CD4-positive, alpha-beta T cell (primary cell): ENCODE measurements at regions of chr12 and their contacts with region 1.

Region 1: DNA sequence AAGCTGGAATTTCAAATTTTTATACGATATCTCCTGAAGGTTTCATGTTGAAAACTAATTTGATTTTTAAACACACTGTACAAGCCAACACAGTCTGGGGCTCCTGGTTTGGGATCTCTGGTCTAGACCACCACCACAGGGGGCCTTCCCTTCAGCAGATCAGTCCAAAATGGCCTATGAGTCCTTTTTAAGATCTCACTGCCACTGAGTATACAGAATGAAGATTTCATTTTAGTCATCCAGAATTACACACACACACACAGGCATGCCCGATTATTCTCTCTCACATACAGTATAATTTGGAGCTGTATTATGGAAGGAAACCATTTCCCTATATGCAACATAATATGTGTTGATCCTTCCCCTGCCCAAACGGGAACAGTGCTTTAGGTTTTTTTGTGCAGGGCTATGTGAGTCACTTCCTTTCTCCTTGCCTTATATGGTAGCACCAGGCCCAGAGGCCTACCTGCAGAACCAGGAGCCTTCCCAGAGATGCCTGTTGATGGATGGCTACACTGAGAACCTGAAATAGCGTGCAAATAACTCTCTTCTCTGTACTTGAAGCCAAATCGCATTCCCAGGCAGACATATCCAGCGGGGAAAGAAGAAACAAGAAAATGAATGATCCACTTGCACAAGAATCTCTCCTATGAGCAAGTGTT is 28.1 kb upstream of the WNK1 start:
- DNase-seq: peak in 7 of 14 experiments; percentile 5 to 63 (median 54)
- ATAC-seq: peak; percentile 55
- H3K4me3 ChIP-seq: no peak overlapping the region
- H3K4me3 Mint-ChIP-seq: no peak overlapping the region
- H3K27ac ChIP-seq: no peak overlapping the region
- H3K27ac Mint-ChIP-seq: peak overlapping the region; percentile 87
- H3K4me1 ChIP-seq: peaks cover 47% of the 10 kb centered on the region
- H3K4me1 Mint-ChIP-seq: peaks cover 89% of the 10 kb centered on the region
- H3K27me3 ChIP-seq: no peaks in the 10 kb centered on the region
- H3K27me3 Mint-ChIP-seq: no peaks in the 10 kb centered on the region
- CTCF ChIP-seq: no peak

Region 2: GRCh38 chr12:738712-739111 is 14.4 kb after region 1 on chr12:
- CTCF ChIA-PET with region 1: interaction called, 3 read pairs
- POLR2A ChIA-PET with region 1: interaction called, 12 read pairs
- intact Hi-C with region 1: no loop called
- DNase-seq: no peak
- ATAC-seq: no peak
- H3K4me3 ChIP-seq: no peak overlapping the region
- H3K4me3 Mint-ChIP-seq: no peak overlapping the region
- H3K27ac ChIP-seq: no peak overlapping the region
- H3K27ac Mint-ChIP-seq: no peak overlapping the region
- H3K4me1 ChIP-seq: no peaks in the 10 kb centered on the region
- H3K4me1 Mint-ChIP-seq: peaks cover 7% of the 10 kb centered on the region
- H3K27me3 ChIP-seq: no peaks in the 10 kb centered on the region
- H3K27me3 Mint-ChIP-seq: no peaks in the 10 kb centered on the region
- CTCF ChIP-seq: no peak

Region 3: DNA sequence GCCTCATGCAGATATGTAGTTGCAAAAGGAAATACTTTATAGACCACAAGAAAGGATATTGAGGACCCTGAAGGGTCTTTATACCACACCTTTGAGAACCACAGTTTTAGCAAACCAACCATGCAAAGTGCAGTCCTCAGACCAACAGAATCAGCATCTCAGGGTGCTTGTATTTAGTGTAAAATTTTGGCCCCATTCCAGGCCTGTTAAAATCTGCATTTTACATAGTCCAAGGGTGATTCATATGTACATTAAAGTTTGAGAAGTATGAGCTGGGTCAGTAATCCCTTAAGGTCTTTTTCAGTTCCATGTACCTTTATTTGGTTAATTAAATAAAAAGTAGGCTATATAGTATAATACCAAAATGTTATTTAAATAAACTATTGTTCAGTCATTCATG is 119.3 kb after region 1 on chr12:
- CTCF ChIA-PET with region 1: no interaction called
- POLR2A ChIA-PET with region 1: no interaction called
- intact Hi-C with region 1: no loop called
- DNase-seq: no peak
- ATAC-seq: no peak
- H3K4me3 ChIP-seq: no peak overlapping the region
- H3K4me3 Mint-ChIP-seq: no peak overlapping the region
- H3K27ac ChIP-seq: no peak overlapping the region
- H3K27ac Mint-ChIP-seq: peak overlapping the region; percentile 52
- H3K4me1 ChIP-seq: peaks cover 8% of the 10 kb centered on the region
- H3K4me1 Mint-ChIP-seq: peaks cover 68% of the 10 kb centered on the region
- H3K27me3 ChIP-seq: no peaks in the 10 kb centered on the region
- H3K27me3 Mint-ChIP-seq: no peaks in the 10 kb centered on the region
- CTCF ChIP-seq: no peak

Region 4: DNA sequence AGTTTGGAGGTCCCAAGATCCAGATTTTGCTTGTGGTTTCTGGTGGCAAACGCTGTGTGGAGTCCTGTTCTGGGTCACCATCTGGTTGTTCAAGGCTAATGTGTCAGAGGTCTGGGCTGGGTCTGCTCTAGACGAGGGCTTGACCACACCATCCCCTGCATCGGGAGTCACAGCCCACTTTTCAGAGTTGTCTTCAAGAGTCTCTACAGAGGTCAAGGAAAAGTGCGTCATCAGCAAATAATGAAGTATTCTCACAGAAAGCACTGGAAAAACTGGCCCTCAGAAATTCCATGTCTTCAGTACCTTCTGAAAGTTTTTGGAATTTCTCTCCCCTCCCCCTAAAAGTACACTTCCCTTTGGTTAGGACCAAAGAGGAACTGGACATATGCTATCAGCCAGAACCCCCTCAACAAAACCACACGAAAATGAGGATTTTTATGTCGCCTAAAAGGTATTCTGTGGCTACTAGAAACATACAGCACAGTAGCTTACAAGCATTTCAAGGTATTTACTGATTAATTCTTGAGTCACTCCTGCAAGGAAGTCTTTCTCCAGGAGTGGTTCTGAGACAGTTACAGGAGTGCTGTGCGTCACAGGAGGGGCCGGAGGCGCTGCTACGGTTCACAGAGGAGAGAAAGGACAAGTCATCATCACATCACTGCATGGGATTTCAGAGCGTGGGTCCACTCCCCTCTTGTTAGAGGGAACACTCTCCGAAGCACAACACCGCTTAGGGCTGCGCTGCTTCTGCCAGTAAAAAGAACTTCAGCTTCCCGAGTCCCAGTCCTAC is 189.8 kb after region 1 on chr12:
- CTCF ChIA-PET with region 1: no interaction called
- POLR2A ChIA-PET with region 1: no interaction called
- intact Hi-C with region 1: no loop called
- DNase-seq: peak in 1 of 14 experiments; percentile 25
- ATAC-seq: no peak
- H3K4me3 ChIP-seq: no peak overlapping the region
- H3K4me3 Mint-ChIP-seq: no peak overlapping the region
- H3K27ac ChIP-seq: no peak overlapping the region
- H3K27ac Mint-ChIP-seq: peak overlapping the region; percentile 75
- H3K4me1 ChIP-seq: peaks cover 10% of the 10 kb centered on the region
- H3K4me1 Mint-ChIP-seq: peaks cover 23% of the 10 kb centered on the region
- H3K27me3 ChIP-seq: no peaks in the 10 kb centered on the region
- H3K27me3 Mint-ChIP-seq: no peaks in the 10 kb centered on the region
- CTCF ChIP-seq: no peak